ENCODE measurements at regions of chr5 and their contacts with region 1.

Region 1: GRCh38 chr5:88833371-88834130 is 49.4 kb downstream of the MEF2C start:
- DNase-seq: peak in 4 of 5 donors; percentile 61 to 79 (median 72)
- ATAC-seq: peak; percentile 63 to 86 (median 78)
- H3K4me3 ChIP-seq: peak overlapping the region in 9 of 12 donors; percentile 21 to 41 (median 35)
- H3K27ac ChIP-seq: peak overlapping the region; percentile 56 to 93 (median 87)
- H3K4me1 ChIP-seq: peaks cover 11 to 97% (median 75%) of the 10 kb centered on the region in 12 donors
- H3K27me3 ChIP-seq: no peaks in the 10 kb centered on the region
- CTCF ChIP-seq: peak in 2 of 12 donors; percentile 23 to 24
- POLR2A ChIP-seq: no peak

Region 2: DNA sequence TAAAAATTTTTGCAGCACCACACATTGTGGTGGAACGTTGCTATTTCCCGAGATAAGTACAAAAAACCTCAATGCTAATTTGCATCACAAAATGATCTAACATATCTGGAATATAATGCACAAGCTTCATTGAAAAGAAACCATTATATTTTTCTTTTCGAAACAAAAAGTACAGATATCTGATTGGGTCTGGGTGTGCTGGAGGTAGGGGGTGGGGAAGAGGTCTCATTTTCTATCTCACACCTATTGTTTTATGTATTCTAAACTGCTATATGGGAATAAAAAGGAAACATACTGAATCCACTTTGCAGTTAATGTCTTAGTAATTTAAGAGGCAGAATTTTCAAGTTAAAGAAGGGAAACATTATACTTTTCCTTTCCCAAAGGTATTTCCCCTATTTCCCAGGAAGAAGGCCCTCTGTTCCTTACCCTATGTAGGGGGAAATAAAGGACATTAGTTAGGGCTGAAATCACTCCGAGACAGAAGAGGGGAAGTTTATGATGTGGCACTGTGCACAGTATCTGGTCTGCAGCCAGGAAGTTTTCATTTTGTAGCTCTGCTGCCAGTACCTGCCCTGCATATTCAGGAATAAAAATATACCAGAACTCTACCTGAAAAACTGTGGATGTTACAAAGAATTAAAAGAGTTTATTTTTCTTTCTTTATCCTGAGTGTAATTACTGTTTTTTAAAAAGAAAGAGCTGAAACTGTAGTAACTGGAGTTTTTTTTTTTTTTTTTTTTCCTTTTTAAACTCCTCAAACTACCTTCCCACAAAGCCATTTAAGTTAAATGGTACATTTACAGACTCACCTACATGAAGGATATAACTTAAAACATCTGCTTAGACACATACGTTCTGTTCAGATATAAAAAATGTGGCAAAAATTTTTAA is 42.0 kb after region 1 on chr5:
- intact Hi-C with region 1: loop called in 7 of 10 experiments (anchors 2 to 10 kb)
- DNase-seq: no peak
- ATAC-seq: peak in 3 of 4 donors; percentile 59 to 68 (median 66)
- H3K4me3 ChIP-seq: peak overlapping the region in 9 of 12 donors; percentile 3 to 74 (median 22)
- H3K27ac ChIP-seq: peak overlapping the region in 10 of 12 donors; percentile 8 to 93 (median 56)
- H3K4me1 ChIP-seq: peaks cover 1 to 75% (median 45%) of the 10 kb centered on the region in 12 donors
- H3K27me3 ChIP-seq: no peaks in the 10 kb centered on the region
- CTCF ChIP-seq: no peak
- POLR2A ChIP-seq: no peak

Measured in heart left ventricle (tissue), 16 donors.